Common myeloid progenitor, CD34-positive (primary cell): ENCODE measurements at regions of chr19 and their contacts with region 1.

Region 1: GRCh38 chr19:1918975-1919374 is 13.8 kb downstream of the ADAT3 start:
- DNase-seq: no peak
- H3K4me3 ChIP-seq: no peak overlapping the region
- H3K27ac ChIP-seq: no peak overlapping the region
- H3K4me1 ChIP-seq: peaks cover 0 to 11% (median 7%) of the 10 kb centered on the region in 4 experiments
- H3K27me3 ChIP-seq: no peaks in the 10 kb centered on the region

Region 2: GRCh38 chr19:1837625-1838105 is 81.3 kb before region 1 on chr19:
- CTCF ChIA-PET with region 1: no interaction called
- POLR2A ChIA-PET with region 1: no interaction called
- DNase-seq: peak; percentile 33 to 63 (median 55)
- H3K4me3 ChIP-seq: no peak overlapping the region
- H3K27ac ChIP-seq: peak overlapping the region in 1 of 2 experiments; percentile 64
- H3K4me1 ChIP-seq: peaks cover 0 to 27% (median 19%) of the 10 kb centered on the region in 4 experiments
- H3K27me3 ChIP-seq: no peaks in the 10 kb centered on the region

Region 3: GRCh38 chr19:1848399-1849131 is 70.4 kb before region 1 on chr19 and contains the start of gene REXO1:
- CTCF ChIA-PET with region 1: no interaction called
- POLR2A ChIA-PET with region 1: no interaction called
- DNase-seq: peak; percentile 95 to 97 (median 97)
- H3K4me3 ChIP-seq: peak within 1 kb of the TSS; percentile 61 to 100 (median 90)
- H3K27ac ChIP-seq: peak within 1 kb of the TSS; percentile 96 to 99
- H3K4me1 ChIP-seq: peaks cover 5 to 73% (median 62%) of the 10 kb centered on the region in 4 experiments
- H3K27me3 ChIP-seq: no peaks in the 10 kb centered on the region

Region 4: DNA sequence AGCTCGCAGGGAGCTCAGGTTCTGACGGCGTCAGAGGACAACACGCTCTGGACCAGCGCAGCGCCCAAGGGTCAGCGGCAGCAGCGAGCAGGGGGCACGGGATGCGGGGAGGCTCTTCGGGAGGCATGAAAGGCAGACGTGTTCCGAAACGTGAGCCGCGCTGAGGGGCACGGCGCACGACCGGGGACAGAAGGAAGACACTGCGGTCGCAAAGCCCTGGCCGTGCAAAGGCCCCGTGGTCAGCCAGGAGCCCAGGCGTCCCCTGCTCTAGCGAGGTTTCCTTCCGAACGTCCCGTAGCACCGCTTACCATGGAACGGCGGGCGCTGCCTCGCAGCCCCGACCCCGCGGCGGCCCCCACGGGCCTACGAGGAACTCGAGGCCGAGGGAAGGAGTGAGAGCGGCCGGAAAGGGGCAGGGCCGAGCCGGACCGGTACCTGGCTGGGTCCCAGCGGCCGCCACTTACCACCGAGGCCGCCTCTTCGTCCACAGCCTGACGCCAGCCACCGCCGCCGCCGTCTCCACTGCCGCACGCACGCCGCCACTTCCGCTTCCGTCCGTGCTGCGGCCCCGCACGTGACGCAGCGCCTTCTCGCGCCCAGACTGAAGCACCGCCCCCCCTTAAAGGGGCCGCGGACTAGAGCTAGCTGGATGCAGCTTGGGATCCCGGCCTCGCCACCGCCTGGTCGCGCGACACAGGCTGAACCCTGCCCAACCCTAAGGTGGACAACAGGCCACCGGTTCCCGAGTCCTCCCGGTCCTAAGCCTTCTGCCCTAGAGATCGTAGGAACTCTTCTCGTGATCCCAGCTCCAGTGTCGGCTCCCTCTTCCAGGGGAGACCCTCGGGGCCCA is 43.1 kb before region 1 on chr19:
- CTCF ChIA-PET with region 1: no interaction called
- POLR2A ChIA-PET with region 1: no interaction called
- DNase-seq: peak; percentile 89 to 94 (median 93)
- H3K4me3 ChIP-seq: peak overlapping the region; percentile 83 to 99 (median 90)
- H3K27ac ChIP-seq: peak overlapping the region; percentile 86 to 95
- H3K4me1 ChIP-seq: peaks cover 6 to 33% (median 25%) of the 10 kb centered on the region in 4 experiments
- H3K27me3 ChIP-seq: no peaks in the 10 kb centered on the region

Region 5: GRCh38 chr19:1929021-1929742 is 10.2 kb after region 1 on chr19:
- CTCF ChIA-PET with region 1: interaction called, 16 read pairs
- POLR2A ChIA-PET with region 1: no interaction called
- DNase-seq: peak; percentile 78 to 87 (median 86)
- H3K4me3 ChIP-seq: peak overlapping the region in 6 of 7 experiments; percentile 39 to 77 (median 60)
- H3K27ac ChIP-seq: no peak overlapping the region
- H3K4me1 ChIP-seq: peaks cover 0 to 16% (median 11%) of the 10 kb centered on the region in 4 experiments
- H3K27me3 ChIP-seq: no peaks in the 10 kb centered on the region